Naive thymus-derived CD8-positive, alpha-beta T cell (primary cell): ENCODE measurements at regions of chr11 and their contacts with region 1.

Region 1: GRCh38 chr11:73995247-73995646 is 12.6 kb upstream of the UCP2 start:
- DNase-seq: peak in 5 of 10 donors; percentile 38 to 93 (median 76)
- ATAC-seq: peak; percentile 65 to 75
- H3K4me3 Mint-ChIP-seq: peak overlapping the region; percentile 65 to 89 (median 80)
- H3K27ac Mint-ChIP-seq: peak overlapping the region; percentile 94 to 100 (median 98)
- H3K4me1 Mint-ChIP-seq: peaks cover 17 to 89% (median 59%) of the 10 kb centered on the region in 4 donors
- H3K27me3 Mint-ChIP-seq: no peaks in the 10 kb centered on the region

Region 2: GRCh38 chr11:73982969-73983740 is 12.1 kb before region 1 on chr11:
- POLR2A ChIA-PET with region 1: interaction called, 1,033 read pairs
- DNase-seq: peak; percentile 86 to 97 (median 92)
- ATAC-seq: peak; percentile 70 to 75
- H3K4me3 Mint-ChIP-seq: peak overlapping the region; percentile 95 to 100 (median 99)
- H3K27ac Mint-ChIP-seq: peak overlapping the region; percentile 98 to 100 (median 100)
- H3K4me1 Mint-ChIP-seq: peaks cover 26 to 59% (median 39%) of the 10 kb centered on the region in 4 donors
- H3K27me3 Mint-ChIP-seq: no peaks in the 10 kb centered on the region

Region 3: DNA sequence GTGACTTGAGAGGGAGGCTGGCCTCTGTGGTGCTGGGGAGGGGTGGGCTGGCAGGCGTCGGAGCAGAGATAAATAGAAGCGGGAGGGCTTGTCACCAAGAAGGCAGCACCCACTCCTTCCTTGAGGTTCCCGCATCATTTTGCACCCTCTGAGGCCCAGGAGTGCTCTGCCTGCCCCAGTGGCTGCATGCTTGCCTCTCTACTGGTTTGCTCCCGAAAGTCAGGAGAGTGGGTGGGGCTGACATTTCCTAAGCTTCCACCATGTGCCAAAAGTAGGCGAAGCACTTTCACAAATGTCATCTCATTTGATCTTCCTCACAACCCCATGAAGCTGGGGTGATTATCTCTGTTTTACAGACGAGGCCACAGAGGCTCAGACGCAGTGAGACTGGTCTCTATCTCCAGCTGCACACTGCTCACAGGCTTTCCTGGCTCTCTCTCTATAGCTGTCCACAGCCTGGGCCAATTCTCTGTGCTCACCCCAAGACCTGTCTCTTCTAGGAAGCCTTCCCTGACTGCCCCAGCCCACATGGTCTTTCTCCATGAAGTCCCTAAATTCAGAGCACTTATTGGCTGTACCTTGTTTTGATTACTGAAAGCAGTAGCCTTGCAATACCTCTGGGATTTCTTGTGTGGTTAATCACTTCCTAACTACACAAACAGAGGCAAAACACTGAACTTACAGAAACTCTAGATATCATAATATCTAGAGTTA is 16.3 kb after region 1 on chr11:
- POLR2A ChIA-PET with region 1: interaction called, 1,033 read pairs
- DNase-seq: peak in 5 of 10 donors; percentile 32 to 55 (median 35)
- ATAC-seq: peak; percentile 77 to 82
- H3K4me3 Mint-ChIP-seq: peak overlapping the region in 9 of 10 donors; percentile 20 to 82 (median 66)
- H3K27ac Mint-ChIP-seq: peak overlapping the region; percentile 90 to 99 (median 95)
- H3K4me1 Mint-ChIP-seq: peaks cover 53 to 94% (median 88%) of the 10 kb centered on the region in 4 donors
- H3K27me3 Mint-ChIP-seq: no peaks in the 10 kb centered on the region

Region 4: DNA sequence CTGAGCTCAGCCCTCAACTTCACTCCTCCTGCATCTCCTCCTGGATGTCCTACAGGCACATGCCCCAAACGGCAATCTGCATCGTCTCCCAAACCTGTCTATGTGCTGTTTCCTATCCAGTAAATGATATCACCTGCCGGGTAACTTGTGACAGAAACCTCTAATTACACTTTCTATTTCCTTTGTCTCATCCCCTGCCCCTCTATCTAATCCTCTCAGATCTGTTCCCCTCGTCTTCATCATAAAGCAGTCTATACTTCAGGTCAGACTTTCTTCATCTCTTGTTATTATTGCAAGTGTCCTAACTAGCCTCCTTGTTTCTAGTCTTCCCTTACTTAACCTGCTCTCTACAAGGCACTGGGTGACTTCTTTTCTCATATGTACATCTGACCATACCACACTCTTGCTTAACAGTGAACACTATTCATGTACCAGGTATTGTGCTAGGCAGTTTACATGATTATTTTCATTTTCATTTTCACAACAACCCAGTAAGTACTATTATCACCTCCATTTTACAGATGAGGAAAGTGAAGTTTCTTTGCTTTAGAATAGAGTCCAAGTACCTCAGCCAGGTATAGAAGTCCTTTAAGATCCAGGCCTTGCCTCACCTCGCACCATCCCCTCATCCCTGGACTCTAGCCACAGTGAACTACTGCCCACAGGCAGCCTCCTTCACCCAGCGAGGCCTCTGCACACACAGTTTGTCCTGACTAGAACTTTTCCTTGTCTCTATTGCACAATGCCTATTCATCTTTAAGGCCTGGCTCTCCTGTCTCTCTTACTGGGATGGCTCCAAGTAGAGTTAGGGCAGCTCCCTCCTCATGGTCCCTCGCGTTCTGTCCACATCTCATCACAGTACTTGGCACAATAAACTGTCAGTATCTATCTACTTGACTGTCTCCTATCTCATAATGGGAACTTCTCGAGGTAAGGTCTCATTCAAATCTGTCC is 35.8 kb after region 1 on chr11:
- POLR2A ChIA-PET with region 1: interaction called, 10 read pairs
- DNase-seq: no peak
- ATAC-seq: no peak
- H3K4me3 Mint-ChIP-seq: peak overlapping the region in 6 of 10 donors; percentile 4 to 67 (median 18)
- H3K27ac Mint-ChIP-seq: peak overlapping the region; percentile 16 to 77 (median 63)
- H3K4me1 Mint-ChIP-seq: peaks cover 14 to 34% (median 31%) of the 10 kb centered on the region in 4 donors
- H3K27me3 Mint-ChIP-seq: no peaks in the 10 kb centered on the region

Region 5: GRCh38 chr11:74055938-74056337 is 60.7 kb after region 1 on chr11:
- POLR2A ChIA-PET with region 1: no interaction called
- DNase-seq: no peak
- ATAC-seq: no peak
- H3K4me3 Mint-ChIP-seq: no peak overlapping the region
- H3K27ac Mint-ChIP-seq: peak overlapping the region in 1 of 10 donors; percentile 60
- H3K4me1 Mint-ChIP-seq: peaks cover 0 to 12% (median 5%) of the 10 kb centered on the region in 4 donors
- H3K27me3 Mint-ChIP-seq: no peaks in the 10 kb centered on the region